ENCODE measurements at regions of chr18 and their contacts with region 1.

Region 1: GRCh38 chr18:78984941-78985784 is 5.5 kb downstream of the SALL3 start:
- DNase-seq: peak; percentile 53
- H3K4me3 ChIP-seq: no peak overlapping the region
- H3K27ac ChIP-seq: no peak overlapping the region
- H3K4me1 ChIP-seq: no peaks in the 10 kb centered on the region
- CTCF ChIP-seq: peak; percentile 63

Region 2: DNA sequence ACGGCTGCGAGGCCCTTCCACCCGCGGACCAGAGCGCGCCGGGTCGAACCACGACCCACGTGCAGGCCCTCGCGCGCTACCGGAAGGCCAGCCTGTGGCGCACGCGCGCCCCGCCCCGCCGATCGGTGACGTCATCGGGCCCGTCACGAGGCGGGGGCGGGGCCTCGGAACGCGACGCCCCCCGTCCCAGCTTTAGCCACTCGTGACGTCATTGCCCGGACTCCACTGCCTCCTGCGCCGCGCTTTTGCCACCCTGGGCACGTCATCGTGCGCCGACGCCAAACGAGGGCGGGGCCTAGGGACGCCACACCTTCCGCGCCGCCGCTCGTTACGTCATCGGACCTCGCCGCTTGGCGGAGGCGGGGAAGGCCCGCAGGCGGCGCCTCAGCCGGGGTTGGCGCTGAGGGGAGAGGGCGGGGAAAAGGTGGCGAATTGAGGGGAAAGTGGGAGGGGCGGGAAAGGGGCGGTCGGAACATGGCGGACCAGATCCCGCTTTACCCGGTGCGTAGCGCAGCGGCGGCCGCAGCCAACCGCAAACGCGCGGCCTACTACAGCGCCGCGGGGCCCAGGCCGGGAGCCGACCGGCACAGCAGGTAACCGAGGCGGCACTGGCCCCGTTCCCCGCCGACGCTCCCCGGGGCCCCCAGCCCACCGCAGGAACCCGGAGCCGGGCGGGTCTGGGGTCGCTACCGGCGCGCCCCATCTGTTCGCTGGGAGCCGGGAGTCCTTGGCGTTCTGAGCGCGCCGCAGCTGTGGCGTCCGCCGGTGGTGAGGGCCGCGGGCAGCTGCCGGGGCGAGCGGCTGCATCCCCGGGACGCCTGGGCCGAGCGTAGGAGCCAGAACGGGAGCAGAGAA is 84.0 kb after region 1 on chr18 and contains the start of gene ATP9B:
- CTCF ChIA-PET with region 1: no interaction called
- POLR2A ChIA-PET with region 1: no interaction called
- intact Hi-C with region 1: no loop called
- DNase-seq: peak; percentile 90
- H3K4me3 ChIP-seq: peak within 1 kb of the TSS; percentile 94
- H3K27ac ChIP-seq: peak within 1 kb of the TSS; percentile 58
- H3K4me1 ChIP-seq: peaks cover 10% of the 10 kb centered on the region
- CTCF ChIP-seq: no peak
- total RNA-seq, gene ATP9B: 22.2 and 27.1 TPM in 2 replicates

Region 3: GRCh38 chr18:79260510-79260909 is 275.3 kb after region 1 on chr18:
- CTCF ChIA-PET with region 1: no interaction called
- POLR2A ChIA-PET with region 1: no interaction called
- intact Hi-C with region 1: loop called (anchors 5 kb)
- DNase-seq: peak; percentile 3
- H3K4me3 ChIP-seq: no peak overlapping the region
- H3K27ac ChIP-seq: no peak overlapping the region
- H3K4me1 ChIP-seq: peaks cover 9% of the 10 kb centered on the region
- CTCF ChIP-seq: no peak

Region 4: GRCh38 chr18:79378542-79379250 is 393.5 kb after region 1 on chr18:
- CTCF ChIA-PET with region 1: no interaction called
- POLR2A ChIA-PET with region 1: no interaction called
- intact Hi-C with region 1: loop called (anchors 5 kb)
- DNase-seq: peak; percentile 53
- H3K4me3 ChIP-seq: no peak overlapping the region
- H3K27ac ChIP-seq: no peak overlapping the region
- H3K4me1 ChIP-seq: peaks cover 8% of the 10 kb centered on the region
- CTCF ChIP-seq: peak; percentile 76